Activated CD4-positive, alpha-beta T cell treated with anti-CD3 and anti-CD28 coated beads, Interleukin-2, amount 10 ng/mL, durations not matched to agents 24 days and 14 days (primary cell): ENCODE measurements at regions of chr20 and their contacts with region 1.

Region 1: GRCh38 chr20:46089417-46090388 is at the start of gene NCOA5:
- DNase-seq: peak; percentile 98
- H3K4me3 Mint-ChIP-seq: peak within 1 kb of the TSS; percentile 89
- H3K27ac Mint-ChIP-seq: peak within 1 kb of the TSS; percentile 92
- H3K4me1 Mint-ChIP-seq: peaks cover 27% of the 10 kb centered on the region
- H3K27me3 Mint-ChIP-seq: peaks cover 2% of the 10 kb centered on the region
- total RNA-seq, gene NCOA5: 27.6 and 30.3 TPM in 2 replicates

Region 2: GRCh38 chr20:45611054-45611453 is 478.6 kb before region 1 on chr20:
- intact Hi-C with region 1: loop called (anchors 5 kb)
- DNase-seq: peak; percentile 54
- H3K4me3 Mint-ChIP-seq: no peak overlapping the region
- H3K27ac Mint-ChIP-seq: peak overlapping the region; percentile 3
- H3K4me1 Mint-ChIP-seq: peaks cover 16% of the 10 kb centered on the region
- H3K27me3 Mint-ChIP-seq: peaks cover 5% of the 10 kb centered on the region

Region 3: DNA sequence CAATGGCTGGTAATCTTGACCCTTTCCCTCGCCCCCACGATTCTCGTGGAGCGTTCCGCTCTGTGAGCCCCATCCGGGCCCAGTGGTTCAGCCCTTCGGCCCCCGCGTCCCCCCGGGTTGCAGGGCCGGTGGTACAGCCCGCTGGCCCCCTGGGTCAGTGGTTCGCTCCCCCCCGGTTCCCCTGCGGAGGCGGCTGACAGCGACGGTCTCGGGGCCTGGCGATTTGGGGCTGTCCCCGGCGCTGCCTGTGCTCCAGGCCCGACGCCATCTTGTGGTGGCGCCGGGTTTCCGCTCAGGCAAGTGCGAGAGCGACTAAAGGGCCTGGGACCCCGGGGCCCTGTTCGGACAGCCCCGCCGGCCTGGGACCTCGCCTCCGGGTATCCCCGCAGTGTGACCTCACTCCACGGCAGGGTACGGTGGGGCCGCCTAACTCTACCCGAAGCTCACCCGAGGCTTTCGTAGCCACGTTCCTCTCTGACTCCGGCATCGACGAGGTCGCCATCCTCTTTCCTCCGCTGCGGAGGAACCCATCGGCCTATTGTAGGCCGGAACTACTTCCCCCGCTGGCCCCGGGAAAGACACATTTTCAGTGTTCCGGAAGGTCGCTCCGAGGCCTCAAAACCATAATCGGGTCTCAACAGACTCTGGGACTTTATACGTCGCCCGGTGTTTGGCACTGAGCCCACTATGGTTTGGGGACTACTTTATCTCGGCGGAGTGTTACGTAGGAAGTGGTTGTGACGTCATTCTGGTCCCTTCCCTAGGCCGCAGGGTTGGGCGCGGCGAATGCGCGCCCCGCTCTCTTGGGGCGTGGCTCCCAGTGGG is 117.8 kb before region 1 on chr20 and contains the start of gene ZNF335:
- intact Hi-C with region 1: loop called (anchors 1 kb)
- DNase-seq: peak; percentile 99
- H3K4me3 Mint-ChIP-seq: peak within 1 kb of the TSS; percentile 93
- H3K27ac Mint-ChIP-seq: peak within 1 kb of the TSS; percentile 99
- H3K4me1 Mint-ChIP-seq: peaks cover 14% of the 10 kb centered on the region
- H3K27me3 Mint-ChIP-seq: no peaks in the 10 kb centered on the region
- total RNA-seq, gene ZNF335: 37.5 and 39.5 TPM in 2 replicates

Region 4: DNA sequence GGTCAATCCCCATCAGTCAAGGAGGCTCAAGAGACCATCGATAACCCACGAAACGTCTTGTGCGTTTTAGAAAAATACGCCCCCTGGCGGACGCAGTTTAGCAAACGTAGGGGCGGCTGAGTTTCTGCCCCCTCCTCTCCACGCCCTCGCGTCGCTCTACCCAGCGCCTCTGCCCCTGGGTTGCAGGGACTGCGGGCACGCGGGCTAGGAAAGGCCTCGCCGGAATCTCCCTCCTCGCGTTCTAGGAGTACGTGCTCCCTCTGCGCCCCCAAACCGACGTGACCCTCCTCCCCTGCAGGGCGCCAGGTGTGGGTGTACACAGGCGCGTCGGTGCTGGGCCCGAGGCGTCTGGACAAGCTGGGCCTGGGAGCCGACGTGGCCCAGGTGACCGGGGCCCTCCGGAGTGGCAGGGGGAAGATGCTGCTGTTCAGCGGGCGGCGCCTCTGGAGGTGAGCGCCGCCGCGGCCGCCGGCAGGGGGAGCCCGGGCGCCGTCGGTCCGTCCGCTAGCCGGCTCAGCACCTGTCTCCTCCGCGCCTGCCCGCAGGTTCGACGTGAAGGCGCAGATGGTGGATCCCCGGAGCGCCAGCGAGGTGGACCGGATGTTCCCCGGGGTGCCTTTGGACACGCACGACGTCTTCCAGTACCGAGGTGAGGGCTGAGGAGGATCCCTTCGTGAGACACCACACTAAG is 75.7 kb before region 1 on chr20:
- intact Hi-C with region 1: loop called (anchors 2 kb)
- DNase-seq: peak; percentile 90
- H3K4me3 Mint-ChIP-seq: peak overlapping the region; percentile 69
- H3K27ac Mint-ChIP-seq: peak overlapping the region; percentile 59
- H3K4me1 Mint-ChIP-seq: peaks cover 44% of the 10 kb centered on the region
- H3K27me3 Mint-ChIP-seq: peaks cover 58% of the 10 kb centered on the region

Region 5: GRCh38 chr20:46022411-46023147 is 67.1 kb before region 1 on chr20:
- intact Hi-C with region 1: loop called (anchors 1 kb)
- DNase-seq: peak; percentile 93
- H3K4me3 Mint-ChIP-seq: peak overlapping the region; percentile 80
- H3K27ac Mint-ChIP-seq: no peak overlapping the region
- H3K4me1 Mint-ChIP-seq: peaks cover 17% of the 10 kb centered on the region
- H3K27me3 Mint-ChIP-seq: peaks cover 43% of the 10 kb centered on the region

Region 6: GRCh38 chr20:46060301-46060881 is 29.3 kb before region 1 on chr20:
- intact Hi-C with region 1: loop called (anchors 2 kb)
- DNase-seq: no peak
- H3K4me3 Mint-ChIP-seq: peak overlapping the region; percentile 19
- H3K27ac Mint-ChIP-seq: peak overlapping the region; percentile 4
- H3K4me1 Mint-ChIP-seq: peaks cover 46% of the 10 kb centered on the region
- H3K27me3 Mint-ChIP-seq: peaks cover 31% of the 10 kb centered on the region